ENCODE measurements at regions of chr11 and their contacts with region 1.

Region 1: GRCh38 chr11:59550368-59550841 is 39.1 kb downstream of the OR4D9 start:
- DNase-seq: peak; percentile 99
- ATAC-seq: peak; percentile 91
- H3K4me3 ChIP-seq: peak overlapping the region; percentile 73
- H3K27ac ChIP-seq: peak overlapping the region; percentile 68
- H3K4me1 ChIP-seq: peaks cover 9% of the 10 kb centered on the region
- H3K27me3 ChIP-seq: no peaks in the 10 kb centered on the region
- CTCF ChIP-seq: peak; percentile 54

Region 2: DNA sequence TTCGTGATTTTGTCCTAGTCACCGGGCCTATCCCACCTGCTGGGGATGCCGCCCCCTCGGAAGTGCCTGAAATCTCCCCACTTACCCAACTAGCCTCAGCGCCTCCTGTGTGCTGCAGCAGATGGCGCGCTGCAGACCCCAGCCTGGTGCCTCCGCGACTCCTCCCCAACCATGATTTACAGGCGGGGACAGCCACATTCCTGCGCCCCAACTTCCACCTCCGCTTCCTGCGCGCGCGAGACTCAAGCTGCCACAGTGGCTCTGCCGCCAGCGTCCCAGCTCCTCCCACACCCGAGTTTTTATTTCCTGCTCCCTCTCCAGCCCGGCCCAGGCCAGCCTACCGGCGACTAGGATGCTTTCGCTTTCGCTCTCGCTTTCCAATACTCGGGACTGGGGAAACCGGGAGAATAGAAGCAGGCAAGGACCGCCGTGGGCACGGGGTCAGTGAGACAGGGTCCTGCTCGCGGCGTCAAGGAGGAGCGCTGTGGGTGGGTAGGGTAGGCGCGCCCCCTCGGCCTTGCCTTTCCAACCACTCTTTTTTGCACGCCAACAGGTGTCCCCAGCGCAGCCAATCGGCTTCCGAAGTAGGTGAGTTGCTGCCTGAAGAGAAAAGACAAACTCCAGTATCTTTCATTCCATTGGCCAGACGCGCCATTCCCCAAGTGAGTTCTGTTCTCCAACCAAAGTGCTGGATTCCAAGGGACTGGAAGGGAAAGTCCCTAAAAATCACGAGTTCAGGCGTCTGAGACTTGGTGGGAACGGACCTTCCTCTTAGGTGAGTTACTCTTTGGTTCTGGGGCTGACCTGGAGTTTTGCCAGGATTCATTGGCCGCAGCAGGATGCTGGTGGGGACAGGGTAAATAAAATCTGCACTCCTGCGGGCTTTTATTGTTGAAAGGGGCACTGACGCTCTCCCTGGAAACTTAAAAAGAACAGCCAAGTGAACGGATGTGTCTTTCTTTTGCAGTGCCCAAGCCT is 407.6 kb before region 1 on chr11 and contains the start of gene FAM111A:
- CTCF ChIA-PET with region 1: no interaction called
- POLR2A ChIA-PET with region 1: no interaction called
- intact Hi-C with region 1: loop called (anchors 10 kb)
- DNase-seq: peak; percentile 96
- ATAC-seq: peak; percentile 77
- H3K4me3 ChIP-seq: peak within 1 kb of the TSS; percentile 79
- H3K27ac ChIP-seq: peak within 1 kb of the TSS; percentile 68
- H3K4me1 ChIP-seq: peaks cover 38% of the 10 kb centered on the region
- H3K27me3 ChIP-seq: no peaks in the 10 kb centered on the region
- CTCF ChIP-seq: peak; percentile 49
- total RNA-seq, gene FAM111A: 38.9 and 49.2 TPM in 2 replicates

Region 3: DNA sequence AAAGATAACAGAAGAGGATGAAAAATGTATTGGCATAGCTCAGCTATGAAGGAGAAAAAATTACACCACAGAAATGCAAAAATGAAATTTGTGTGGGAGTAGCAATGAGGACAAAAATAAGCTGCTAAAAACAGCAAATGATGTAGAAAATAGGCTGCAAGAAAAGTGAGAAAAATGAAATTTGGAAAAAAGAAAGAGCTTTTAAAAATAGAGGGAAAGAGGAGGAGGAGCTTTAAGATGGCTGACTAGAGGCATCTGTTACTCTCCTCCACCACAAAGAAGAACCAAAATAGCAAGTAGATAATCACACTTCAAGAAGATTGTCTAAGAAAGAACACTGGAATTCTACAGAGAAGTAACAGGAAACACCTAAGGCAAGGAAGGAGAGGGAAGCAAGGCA is 215.4 kb before region 1 on chr11:
- CTCF ChIA-PET with region 1: no interaction called
- POLR2A ChIA-PET with region 1: no interaction called
- intact Hi-C with region 1: no loop called
- DNase-seq: no peak
- ATAC-seq: no peak
- H3K4me3 ChIP-seq: no peak overlapping the region
- H3K27ac ChIP-seq: no peak overlapping the region
- H3K4me1 ChIP-seq: no peaks in the 10 kb centered on the region
- H3K27me3 ChIP-seq: no peaks in the 10 kb centered on the region
- CTCF ChIP-seq: no peak

Region 4: GRCh38 chr11:59560702-59561469 is 10.5 kb after region 1 on chr11:
- CTCF ChIA-PET with region 1: no interaction called
- POLR2A ChIA-PET with region 1: no interaction called
- intact Hi-C with region 1: loop called (anchors 1 kb)
- DNase-seq: peak; percentile 95
- ATAC-seq: peak; percentile 64
- H3K4me3 ChIP-seq: peak overlapping the region; percentile 96
- H3K27ac ChIP-seq: peak overlapping the region; percentile 89
- H3K4me1 ChIP-seq: peaks cover 6% of the 10 kb centered on the region; the same call in 1 of the 2 replicates
- H3K27me3 ChIP-seq: no peaks in the 10 kb centered on the region
- CTCF ChIP-seq: no peak

Region 5: GRCh38 chr11:59615637-59616395 is 65.4 kb after region 1 on chr11 and contains the start of gene OSBP:
- CTCF ChIA-PET with region 1: no interaction called
- POLR2A ChIA-PET with region 1: no interaction called
- intact Hi-C with region 1: loop called (anchors 1 kb)
- DNase-seq: peak; percentile 100
- ATAC-seq: peak; percentile 86
- H3K4me3 ChIP-seq: peak within 1 kb of the TSS; percentile 95
- H3K27ac ChIP-seq: peak within 1 kb of the TSS; percentile 35
- H3K4me1 ChIP-seq: peaks cover 39% of the 10 kb centered on the region
- H3K27me3 ChIP-seq: no peaks in the 10 kb centered on the region
- CTCF ChIP-seq: no peak
- total RNA-seq, gene OSBP: 36.3 and 59.4 TPM in 2 replicates

Measured in PC-3 (cell line).